ENCODE measurements at regions of chr14 and their contacts with region 1.

Region 1: DNA sequence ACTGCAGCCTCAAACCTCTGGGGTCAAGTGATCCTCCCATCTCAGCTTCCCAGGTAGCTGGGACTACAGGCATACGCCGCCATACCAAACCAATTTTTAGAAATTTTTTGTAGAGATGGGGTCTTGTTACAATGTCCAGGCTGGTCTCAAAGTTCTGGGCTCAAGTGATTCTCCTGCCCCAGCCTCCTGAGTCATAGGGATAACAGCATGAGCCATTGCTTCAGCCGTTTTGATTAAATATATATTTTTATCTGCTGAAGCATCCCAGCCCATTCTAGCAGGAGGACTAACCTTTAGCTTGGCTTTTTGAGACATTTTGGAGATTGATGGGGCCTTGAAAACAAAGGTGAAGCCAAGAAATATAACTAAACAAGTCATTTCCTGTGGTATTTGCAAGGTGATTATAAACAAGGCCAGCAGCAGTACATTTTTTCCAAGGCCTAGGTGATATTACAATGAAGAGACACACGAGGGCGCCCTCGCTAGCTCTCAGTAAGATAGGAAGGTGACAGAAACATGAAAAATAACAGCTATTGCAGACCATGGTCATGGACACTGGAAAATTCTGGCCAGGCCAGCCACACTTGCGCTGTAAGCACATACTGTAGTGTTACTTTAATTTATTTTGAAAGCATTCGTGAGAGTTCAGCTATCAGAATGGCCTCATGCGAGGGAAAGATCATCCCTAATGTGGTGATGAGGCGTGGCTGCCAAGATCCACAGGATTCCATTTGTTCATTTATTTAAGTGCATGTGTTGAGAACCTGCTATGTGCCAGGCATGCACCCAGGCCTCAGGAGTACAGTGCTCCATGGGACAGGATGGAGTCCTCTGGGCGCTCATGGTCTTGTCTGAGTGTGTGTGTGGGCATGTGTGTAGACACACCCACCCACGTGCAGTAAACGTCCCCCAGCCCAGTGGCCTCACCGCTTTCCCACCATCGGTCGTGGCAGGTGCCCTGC is 63.5 kb downstream of the DGLUCY start:
- DNase-seq: no peak
- ATAC-seq: peak in 7 of 8 donors; percentile 23 to 66 (median 54)
- H3K4me3 ChIP-seq: no peak overlapping the region
- H3K27ac ChIP-seq: peak overlapping the region in 3 of 10 donors; percentile 30 to 68 (median 55)
- H3K4me1 ChIP-seq: peaks cover 0 to 21% (median 7%) of the 10 kb centered on the region in 9 donors
- H3K27me3 ChIP-seq: no peaks in the 10 kb centered on the region
- CTCF ChIP-seq: peak; percentile 47 to 83 (median 76)

Region 2: DNA sequence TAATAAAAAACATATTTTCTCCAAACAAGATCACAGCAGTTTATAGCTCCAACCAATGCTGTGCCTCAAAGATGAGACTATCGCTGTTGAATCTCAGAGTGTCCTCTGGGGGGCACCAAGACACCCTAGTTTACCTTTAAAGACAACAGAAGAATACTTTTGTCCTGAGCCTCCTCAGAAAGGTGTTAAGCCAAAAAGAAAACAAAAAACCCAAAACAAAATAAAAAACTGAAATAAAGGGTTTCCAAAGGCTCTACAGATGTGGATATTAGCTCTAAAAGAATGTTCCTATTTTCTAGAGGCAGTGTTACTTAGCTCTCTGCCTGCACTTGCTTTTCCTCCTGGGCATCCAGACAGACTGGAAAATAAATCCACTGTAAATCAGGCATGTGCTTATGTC is 274.3 kb before region 1 on chr14:
- intact Hi-C with region 1: loop called (anchors 1 to 5 kb)
- DNase-seq: peak in 1 of 2 donors; percentile 58
- ATAC-seq: peak in 7 of 8 donors; percentile 72 to 88 (median 81)
- H3K4me3 ChIP-seq: no peak overlapping the region
- H3K27ac ChIP-seq: no peak overlapping the region
- H3K4me1 ChIP-seq: no peaks in the 10 kb centered on the region
- H3K27me3 ChIP-seq: no peaks in the 10 kb centered on the region
- CTCF ChIP-seq: peak; percentile 29 to 84 (median 74)

Region 3: DNA sequence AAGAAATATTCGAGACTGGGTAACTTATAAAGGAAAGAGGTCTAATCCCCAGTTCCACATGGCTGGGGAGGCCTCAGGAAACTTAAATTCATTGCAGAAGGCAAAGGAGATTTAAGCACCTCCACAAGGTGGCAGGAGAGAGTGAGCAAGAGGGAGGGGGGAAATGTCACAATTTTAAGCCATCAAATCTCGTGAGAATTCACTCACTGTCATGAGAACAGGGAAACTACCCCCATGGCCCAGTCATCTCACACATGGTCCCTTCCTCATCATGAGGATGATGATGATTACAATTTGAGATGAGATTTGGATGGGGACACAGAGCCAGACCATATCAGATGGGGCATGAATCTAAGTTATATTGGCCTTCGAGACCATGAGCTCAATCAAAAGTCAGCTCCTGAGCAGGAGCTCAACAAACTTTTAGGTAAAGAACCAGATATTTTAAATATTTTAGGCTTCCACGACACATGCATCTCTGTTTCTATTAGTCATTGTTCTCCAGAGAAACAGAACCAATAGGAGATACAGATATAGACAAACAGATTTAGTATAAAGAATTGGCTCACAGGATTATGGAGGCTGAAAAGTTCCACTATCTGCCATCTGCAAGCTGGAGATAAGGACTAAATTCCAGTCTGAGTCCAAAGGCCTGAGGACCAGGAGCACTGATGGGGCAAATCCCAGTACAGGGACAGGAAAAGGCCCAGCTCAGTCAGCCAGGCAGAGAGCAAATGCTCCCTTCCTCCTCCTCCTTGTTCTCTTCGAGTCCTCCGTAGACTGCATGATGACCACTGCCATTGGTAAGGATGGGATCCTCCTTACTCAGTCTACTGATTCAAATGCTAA is 38.6 kb before region 1 on chr14:
- intact Hi-C with region 1: loop called in 1 of 10 experiments (anchors 5 kb)
- DNase-seq: no peak
- ATAC-seq: peak in 2 of 8 donors; percentile 9 to 21
- H3K4me3 ChIP-seq: no peak overlapping the region
- H3K27ac ChIP-seq: no peak overlapping the region
- H3K4me1 ChIP-seq: peaks cover 5 to 61% (median 22%) of the 10 kb centered on the region in 9 donors
- H3K27me3 ChIP-seq: no peaks in the 10 kb centered on the region
- CTCF ChIP-seq: peak; percentile 17 to 60 (median 47)

Region 4: DNA sequence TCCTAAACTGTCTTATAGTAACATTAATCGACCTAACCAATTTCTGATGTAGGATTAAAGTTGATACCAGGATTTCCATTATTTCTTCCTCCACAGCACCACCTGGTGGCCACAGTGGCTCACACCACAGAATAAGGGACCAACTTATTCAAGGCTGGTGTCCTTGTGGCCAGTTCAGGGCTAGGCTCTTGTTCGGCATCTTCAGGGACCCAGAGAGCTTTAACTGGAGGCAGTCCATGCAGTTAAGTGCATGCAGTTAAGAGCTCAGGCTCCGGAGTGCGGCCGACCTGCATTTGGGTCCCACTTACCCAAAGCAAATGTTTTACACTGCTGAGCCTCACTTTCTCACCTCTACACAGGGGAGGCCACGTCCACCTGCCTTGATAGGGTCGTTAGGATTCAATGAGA is 109.2 kb after region 1 on chr14:
- intact Hi-C with region 1: loop called (anchors 1 to 5 kb)
- DNase-seq: peak; percentile 66 to 74
- ATAC-seq: peak; percentile 45 to 76 (median 66)
- H3K4me3 ChIP-seq: no peak overlapping the region
- H3K27ac ChIP-seq: no peak overlapping the region
- H3K4me1 ChIP-seq: peaks cover 0 to 19% (median 4%) of the 10 kb centered on the region in 9 donors
- H3K27me3 ChIP-seq: no peaks in the 10 kb centered on the region
- CTCF ChIP-seq: peak; percentile 83 to 93 (median 90)

Region 5: GRCh38 chr14:91292491-91292890 is 115.1 kb after region 1 on chr14:
- intact Hi-C with region 1: loop called in 8 of 10 experiments (anchors 2 to 5 kb)
- DNase-seq: no peak
- ATAC-seq: peak in 1 of 8 donors; percentile 19
- H3K4me3 ChIP-seq: no peak overlapping the region
- H3K27ac ChIP-seq: no peak overlapping the region
- H3K4me1 ChIP-seq: no peaks in the 10 kb centered on the region
- H3K27me3 ChIP-seq: no peaks in the 10 kb centered on the region
- CTCF ChIP-seq: no peak

Region 6: GRCh38 chr14:91418387-91419043 is 241.2 kb after region 1 on chr14:
- intact Hi-C with region 1: loop called in 1 of 10 experiments (anchors 10 kb)
- DNase-seq: peak; percentile 39 to 75
- ATAC-seq: peak; percentile 39 to 85 (median 73)
- H3K4me3 ChIP-seq: peak overlapping the region; percentile 18 to 84 (median 68)
- H3K27ac ChIP-seq: peak overlapping the region in 5 of 10 donors; percentile 18 to 75 (median 58)
- H3K4me1 ChIP-seq: peaks cover 3 to 50% (median 23%) of the 10 kb centered on the region in 9 donors
- H3K27me3 ChIP-seq: peaks cover 0 to 28% (median 17%) of the 10 kb centered on the region in 7 donors
- CTCF ChIP-seq: peak; percentile 89 to 99 (median 95)